Activated CD4-positive, alpha-beta T cell treated with anti-CD3 and anti-CD28 coated beads for 36 hours (primary cell): ENCODE measurements at regions of chr2 and their contacts with region 1.

Region 1: GRCh38 chr2:96195410-96196066 is 13.1 kb downstream of the STARD7 start:
- DNase-seq: no peak
- ATAC-seq: no peak
- H3K4me3 Mint-ChIP-seq: no peak overlapping the region
- H3K27ac Mint-ChIP-seq: peak overlapping the region; percentile 17
- H3K4me1 Mint-ChIP-seq: peaks cover 33% of the 10 kb centered on the region
- H3K27me3 Mint-ChIP-seq: no peaks in the 10 kb centered on the region

Region 2: GRCh38 chr2:96180521-96180920 is 15.0 kb before region 1 on chr2:
- CTCF ChIA-PET with region 1: interaction called, 17 read pairs
- POLR2A ChIA-PET with region 1: no interaction called
- intact Hi-C with region 1: loop called in 1 of 2 experiments (anchors 2 kb)
- DNase-seq: no peak
- ATAC-seq: peak; percentile 49
- H3K4me3 Mint-ChIP-seq: no peak overlapping the region
- H3K27ac Mint-ChIP-seq: no peak overlapping the region
- H3K4me1 Mint-ChIP-seq: no peaks in the 10 kb centered on the region
- H3K27me3 Mint-ChIP-seq: no peaks in the 10 kb centered on the region